Lower leg skin (tissue), 4 donors: ENCODE measurements at regions of chr15 and their contacts with region 1.

Region 1: GRCh38 chr15:98421419-98422129 is 226.8 kb upstream of the IGF1R start:
- DNase-seq: peak; percentile 47 to 93
- H3K4me3 ChIP-seq: no peak overlapping the region
- CTCF ChIP-seq: peak in 1 of 3 donors; percentile 76
- POLR2A ChIP-seq: no peak

Region 2: GRCh38 chr15:98311566-98312188 is 109.9 kb before region 1 on chr15:
- intact Hi-C with region 1: loop called (anchors 5 kb)
- DNase-seq: peak; percentile 87 to 95
- H3K4me3 ChIP-seq: no peak overlapping the region
- CTCF ChIP-seq: no peak
- POLR2A ChIP-seq: no peak